Spleen (tissue), 13 donors: ENCODE measurements at regions of chr9 and their contacts with region 1.

Region 1: DNA sequence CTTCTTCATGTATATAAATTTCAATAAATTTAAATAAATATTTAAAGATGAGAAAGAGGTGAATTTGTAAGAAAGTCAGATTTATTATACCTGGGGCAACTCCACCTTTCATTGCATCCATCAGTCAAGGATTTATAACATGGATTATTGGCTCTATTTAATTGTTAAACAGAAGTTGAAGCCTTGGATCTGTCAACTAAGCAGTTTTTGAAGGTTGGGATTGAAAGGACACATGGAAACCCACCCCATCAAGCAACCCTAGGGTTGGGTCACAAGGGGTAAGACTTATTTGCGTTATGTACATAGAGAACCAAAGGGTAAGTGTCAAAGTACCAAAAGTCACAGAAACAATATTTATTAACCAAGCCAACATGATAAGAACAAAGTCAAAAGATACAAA is 342.5 kb downstream of the ELAVL2 start:
- DNase-seq: no peak
- H3K4me3 ChIP-seq: no peak overlapping the region
- H3K27ac ChIP-seq: no peak overlapping the region
- H3K4me1 ChIP-seq: no peaks in the 10 kb centered on the region
- H3K27me3 ChIP-seq: no peaks in the 10 kb centered on the region
- CTCF ChIP-seq: no peak
- POLR2A ChIP-seq: no peak

Region 2: GRCh38 chr9:23543419-23543818 is 59.9 kb after region 1 on chr9:
- intact Hi-C with region 1: loop called (anchors 10 kb)
- DNase-seq: no peak
- H3K4me3 ChIP-seq: no peak overlapping the region
- H3K27ac ChIP-seq: no peak overlapping the region
- H3K4me1 ChIP-seq: no peaks in the 10 kb centered on the region
- H3K27me3 ChIP-seq: no peaks in the 10 kb centered on the region
- CTCF ChIP-seq: no peak
- POLR2A ChIP-seq: no peak